ENCODE measurements at regions of chr17 and their contacts with region 1.

Region 1: GRCh38 chr17:5237541-5238016 is 2.9 kb upstream of the SCIMP start:
- DNase-seq: peak; percentile 71
- ATAC-seq: peak; percentile 20
- H3K4me3 ChIP-seq: peak overlapping the region in 1 of 5 experiments; percentile 6
- H3K4me3 Mint-ChIP-seq: peak overlapping the region; percentile 65
- H3K27ac ChIP-seq: peak overlapping the region; percentile 72 to 80
- H3K27ac Mint-ChIP-seq: peak overlapping the region; percentile 90
- H3K4me1 ChIP-seq: peaks cover 71 to 92% of the 10 kb centered on the region in 2 donors
- H3K4me1 Mint-ChIP-seq: peaks cover 73% of the 10 kb centered on the region
- H3K27me3 ChIP-seq: no peaks in the 10 kb centered on the region
- H3K27me3 Mint-ChIP-seq: no peaks in the 10 kb centered on the region
- CTCF ChIP-seq: peak; percentile 55

Region 2: GRCh38 chr17:5111402-5112204 is 126.0 kb before region 1 on chr17 and contains the start of gene ZNF232:
- CTCF ChIA-PET with region 1: no interaction called
- POLR2A ChIA-PET with region 1: no interaction called
- intact Hi-C with region 1: loop called (anchors 5 kb)
- DNase-seq: peak; percentile 94
- ATAC-seq: peak; percentile 91
- H3K4me3 ChIP-seq: peak within 1 kb of the TSS; percentile 80 to 93 (median 88)
- H3K4me3 Mint-ChIP-seq: peak within 1 kb of the TSS; percentile 86
- H3K27ac ChIP-seq: peak within 1 kb of the TSS; percentile 62 to 74
- H3K27ac Mint-ChIP-seq: peak within 1 kb of the TSS; percentile 70
- H3K4me1 ChIP-seq: peaks cover 15 to 20% of the 10 kb centered on the region in 2 donors
- H3K4me1 Mint-ChIP-seq: peaks cover 25% of the 10 kb centered on the region
- H3K27me3 ChIP-seq: peaks cover 0 to 16% (median 8%) of the 10 kb centered on the region in 4 experiments
- H3K27me3 Mint-ChIP-seq: peaks cover 10% of the 10 kb centered on the region
- CTCF ChIP-seq: no peak
- total RNA-seq, gene ZNF232: 17.4 and 19.3 TPM in 2 replicates

Region 3: DNA sequence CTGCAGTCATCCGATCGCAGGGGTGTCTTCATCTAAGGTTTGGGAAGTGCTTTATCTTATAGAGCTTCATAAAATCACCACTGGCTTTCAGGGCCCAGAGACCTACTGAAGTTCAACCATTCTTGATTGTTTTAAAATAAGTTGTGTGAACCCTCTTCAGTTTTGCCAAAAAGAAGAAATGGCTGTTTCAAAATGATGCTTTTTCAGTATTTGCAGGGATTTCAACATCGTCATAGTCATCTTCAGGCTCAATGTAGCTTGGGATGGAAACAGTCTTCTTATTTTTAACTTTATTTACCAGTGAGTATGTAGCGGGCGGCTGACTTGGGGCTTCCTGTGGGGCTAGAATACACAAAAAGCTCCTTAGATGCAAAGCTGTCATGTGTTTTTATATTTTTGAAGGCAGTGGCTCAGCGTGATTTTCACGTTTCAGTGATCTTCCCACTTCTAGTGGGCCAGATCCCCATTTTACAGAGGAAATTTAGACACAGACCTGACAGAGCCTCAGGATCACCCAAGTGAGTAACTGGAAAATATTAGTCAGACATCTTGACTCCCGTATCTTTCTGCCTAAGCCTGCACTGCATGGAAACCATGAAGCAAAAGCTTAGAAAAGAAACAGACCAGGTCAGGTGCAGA is 26.8 kb before region 1 on chr17:
- CTCF ChIA-PET with region 1: interaction called, 303 read pairs
- POLR2A ChIA-PET with region 1: interaction called, 6 read pairs
- intact Hi-C with region 1: loop called (anchors 1 kb)
- DNase-seq: peak; percentile 62
- ATAC-seq: peak; percentile 65
- H3K4me3 ChIP-seq: peak overlapping the region in 1 of 5 experiments; percentile 4
- H3K4me3 Mint-ChIP-seq: peak overlapping the region; percentile 74
- H3K27ac ChIP-seq: peak overlapping the region; percentile 91
- H3K27ac Mint-ChIP-seq: peak overlapping the region; percentile 93
- H3K4me1 ChIP-seq: peaks cover 64 to 80% of the 10 kb centered on the region in 2 donors
- H3K4me1 Mint-ChIP-seq: peaks cover 75% of the 10 kb centered on the region
- H3K27me3 ChIP-seq: no peaks in the 10 kb centered on the region
- H3K27me3 Mint-ChIP-seq: no peaks in the 10 kb centered on the region
- CTCF ChIP-seq: no peak

Region 4: DNA sequence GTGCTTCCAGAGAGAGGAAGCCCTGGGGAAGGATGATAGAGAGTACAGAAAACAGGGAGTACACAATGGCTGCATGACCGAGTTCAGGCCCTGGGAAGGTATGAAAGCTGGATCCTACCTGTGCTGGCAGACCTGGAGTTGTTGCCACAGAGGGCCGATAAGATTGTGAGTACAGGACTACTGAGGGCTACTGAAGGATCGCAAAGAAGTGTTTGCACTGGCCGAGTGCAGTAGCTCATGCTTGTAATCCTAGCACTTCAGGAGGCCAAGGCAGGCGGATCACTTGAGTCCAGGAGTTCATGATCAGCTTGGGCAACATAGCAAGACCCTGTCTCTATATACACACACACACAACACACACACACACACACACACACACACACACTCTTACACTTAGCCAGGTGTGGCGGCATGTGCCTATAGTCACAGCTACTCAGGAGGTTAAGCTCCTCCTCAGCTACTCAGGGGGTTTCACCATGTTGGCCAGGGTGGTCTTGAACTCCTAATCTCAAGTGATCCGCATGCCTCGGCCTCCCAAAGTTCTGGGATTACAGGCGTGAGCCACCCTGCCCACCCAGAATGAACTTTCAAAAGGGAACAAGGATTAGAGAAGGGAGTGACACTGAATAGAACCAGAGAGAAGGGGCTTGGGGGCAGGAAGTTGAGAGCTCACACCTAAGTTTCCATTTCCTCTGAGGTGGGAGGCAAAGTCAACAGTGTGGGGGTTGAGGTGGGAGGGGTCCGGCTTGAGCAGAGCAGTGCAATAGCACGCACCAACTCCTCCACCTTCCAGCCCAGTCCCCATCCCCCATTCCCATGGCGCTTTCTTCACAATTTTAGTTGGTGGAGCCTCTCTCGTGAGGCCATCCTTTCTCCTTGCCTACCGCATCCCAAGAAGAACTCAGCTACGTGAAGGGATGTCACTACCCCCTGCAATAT is 10.4 kb before region 1 on chr17:
- CTCF ChIA-PET with region 1: interaction called, 63 read pairs
- POLR2A ChIA-PET with region 1: interaction called, 39 read pairs
- intact Hi-C with region 1: loop called (anchors 1 kb)
- DNase-seq: peak; percentile 59
- ATAC-seq: peak; percentile 65
- H3K4me3 ChIP-seq: peak overlapping the region in 3 of 5 experiments; percentile 17 to 59 (median 39)
- H3K4me3 Mint-ChIP-seq: peak overlapping the region; percentile 84
- H3K27ac ChIP-seq: peak overlapping the region; percentile 83 to 97
- H3K27ac Mint-ChIP-seq: peak overlapping the region; percentile 98
- H3K4me1 ChIP-seq: peaks cover 99 to 100% of the 10 kb centered on the region in 2 donors
- H3K4me1 Mint-ChIP-seq: peaks cover 89% of the 10 kb centered on the region
- H3K27me3 ChIP-seq: no peaks in the 10 kb centered on the region
- H3K27me3 Mint-ChIP-seq: no peaks in the 10 kb centered on the region
- CTCF ChIP-seq: no peak

Region 5: DNA sequence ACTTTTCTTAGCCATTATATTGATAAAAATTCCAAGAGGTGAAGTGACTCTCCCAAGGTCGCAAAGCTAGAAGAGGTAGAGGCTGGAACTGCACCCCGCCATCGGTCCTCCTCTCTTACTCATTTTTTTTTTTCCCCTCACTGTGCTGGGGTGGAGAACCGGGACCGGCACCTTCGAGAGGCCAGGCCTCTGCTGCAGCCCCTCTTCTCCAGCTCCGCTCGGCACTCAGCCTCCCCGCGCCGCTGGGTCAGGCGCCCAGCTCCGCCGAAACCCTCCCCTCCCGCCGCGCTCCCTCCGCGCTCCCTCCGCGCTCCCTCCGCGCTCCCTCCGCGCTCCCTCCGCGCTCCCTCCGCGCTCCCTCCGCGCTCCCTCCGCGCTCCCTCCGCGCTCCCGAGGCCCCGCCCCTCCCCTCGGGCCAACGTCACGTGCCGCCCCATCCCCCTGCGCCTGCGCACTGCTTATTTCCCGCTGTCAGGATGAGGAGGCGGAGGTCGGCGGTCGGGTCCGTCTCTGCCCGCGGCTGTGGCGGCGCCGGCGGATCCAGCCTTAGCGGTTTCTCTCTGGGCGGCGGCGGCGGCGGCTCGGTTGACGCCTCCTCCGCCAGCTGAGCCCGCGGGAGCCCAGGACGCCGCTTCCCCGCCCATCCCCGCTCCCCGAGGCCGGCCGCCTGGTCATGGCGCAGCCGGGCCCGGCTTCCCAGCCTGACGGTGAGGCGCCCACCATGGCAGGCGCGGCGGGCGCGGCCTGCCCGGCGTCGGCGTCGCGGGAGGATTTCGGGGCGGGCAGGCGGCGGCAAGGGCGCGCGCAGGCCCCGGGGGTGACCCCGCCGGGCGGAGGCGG is 44.5 kb after region 1 on chr17 and contains the start of gene RABEP1:
- CTCF ChIA-PET with region 1: no interaction called
- POLR2A ChIA-PET with region 1: interaction called, 3 read pairs
- intact Hi-C with region 1: loop called (anchors 5 kb)
- DNase-seq: peak; percentile 94
- ATAC-seq: peak; percentile 85
- H3K4me3 ChIP-seq: peak within 1 kb of the TSS; percentile 63 to 90 (median 75)
- H3K4me3 Mint-ChIP-seq: peak within 1 kb of the TSS; percentile 88
- H3K27ac ChIP-seq: peak within 1 kb of the TSS; percentile 33 to 69
- H3K27ac Mint-ChIP-seq: peak within 1 kb of the TSS; percentile 94
- H3K4me1 ChIP-seq: peaks cover 38 to 44% of the 10 kb centered on the region in 2 donors
- H3K4me1 Mint-ChIP-seq: peaks cover 40% of the 10 kb centered on the region
- H3K27me3 ChIP-seq: no peaks in the 10 kb centered on the region
- H3K27me3 Mint-ChIP-seq: no peaks in the 10 kb centered on the region
- CTCF ChIP-seq: peak; percentile 14
- total RNA-seq, gene RABEP1: 86.1 and 91.1 TPM in 2 replicates

Region 6: GRCh38 chr17:5419356-5419958 is 181.9 kb after region 1 on chr17 and contains the start of gene NUP88:
- CTCF ChIA-PET with region 1: no interaction called
- POLR2A ChIA-PET with region 1: no interaction called
- intact Hi-C with region 1: loop called (anchors 2 kb)
- DNase-seq: peak; percentile 98
- ATAC-seq: peak; percentile 83
- H3K4me3 ChIP-seq: peak within 1 kb of the TSS; percentile 93 to 100 (median 99)
- H3K4me3 Mint-ChIP-seq: peak within 1 kb of the TSS; percentile 94
- H3K27ac ChIP-seq: peak within 1 kb of the TSS; percentile 98 to 100
- H3K27ac Mint-ChIP-seq: peak within 1 kb of the TSS; percentile 99
- H3K4me1 ChIP-seq: peaks cover 25 to 35% of the 10 kb centered on the region in 2 donors
- H3K4me1 Mint-ChIP-seq: peaks cover 49% of the 10 kb centered on the region
- H3K27me3 ChIP-seq: no peaks in the 10 kb centered on the region
- H3K27me3 Mint-ChIP-seq: no peaks in the 10 kb centered on the region
- CTCF ChIP-seq: no peak
- total RNA-seq, gene NUP88: 221 and 238 TPM in 2 replicates